ENCODE measurements at regions of chr17 and their contacts with region 1.

Region 1: DNA sequence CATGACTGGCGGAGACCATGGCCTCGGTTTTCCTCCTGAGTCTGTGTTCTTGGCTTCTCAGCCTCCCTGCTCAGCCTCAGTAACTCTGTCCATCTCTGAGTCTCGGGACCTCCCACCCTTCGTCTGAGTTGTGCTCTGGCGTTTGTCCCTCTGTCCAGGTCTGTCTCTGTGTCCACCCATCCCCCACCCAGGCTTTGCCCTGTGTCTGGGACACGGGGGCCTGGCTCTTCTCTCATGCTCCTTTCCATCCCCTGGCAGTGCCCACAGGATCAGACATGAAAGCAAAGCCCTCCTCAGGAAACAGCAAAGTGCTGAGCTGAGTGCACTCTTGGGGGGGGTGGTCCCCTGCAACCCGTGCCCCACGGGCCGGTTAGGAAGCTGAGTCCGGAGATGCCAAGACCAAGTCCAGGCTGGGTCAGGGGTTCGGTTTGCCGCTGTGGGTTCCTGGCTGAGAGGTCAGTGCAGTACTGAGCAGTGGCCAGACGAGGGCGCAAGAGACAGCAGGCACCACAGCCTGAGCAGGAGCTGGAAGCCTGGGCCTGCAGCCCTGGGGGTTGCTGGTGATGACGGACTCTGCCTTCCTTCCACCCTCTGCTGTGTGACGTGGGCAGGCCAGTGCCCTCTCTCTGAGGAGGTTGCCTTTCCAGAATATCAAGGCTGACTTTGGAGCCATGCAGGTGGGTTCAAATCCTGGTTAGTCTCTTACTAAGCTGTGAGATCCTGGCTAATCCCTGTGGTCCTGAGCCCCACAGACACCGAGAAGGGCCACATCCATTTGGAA is 2.5 kb downstream of the P2RX1 start:
- DNase-seq: peak; percentile 84
- ATAC-seq: peak; percentile 69 to 70

Region 2: GRCh38 chr17:3859940-3860339 is 53.8 kb before region 1 on chr17:
- intact Hi-C with region 1: loop called (anchors 5 to 10 kb)
- DNase-seq: no peak
- ATAC-seq: no peak

Region 3: DNA sequence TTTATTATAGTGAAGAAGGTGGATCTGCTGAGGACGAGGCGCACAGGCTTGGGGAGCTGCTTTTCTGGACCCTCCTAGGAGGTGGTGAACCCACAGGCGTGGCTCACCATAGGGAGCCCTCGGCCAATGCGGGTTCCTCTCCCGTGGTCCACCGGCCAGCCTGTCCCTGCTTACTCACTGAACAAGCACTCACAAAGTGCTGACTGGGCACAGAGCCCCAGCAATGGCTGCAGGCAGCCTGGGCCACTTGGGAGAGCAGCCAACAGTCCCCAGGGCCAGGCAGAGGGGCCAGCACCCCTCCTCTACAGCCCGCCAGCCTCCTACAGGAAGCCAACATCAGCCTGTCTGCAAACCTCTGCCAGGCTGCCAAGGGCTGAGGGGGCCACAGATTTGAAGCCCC is 48.5 kb before region 1 on chr17:
- intact Hi-C with region 1: loop called (anchors 5 to 10 kb)
- DNase-seq: peak; percentile 65
- ATAC-seq: peak in 1 of 2 donors; percentile 56

Region 4: DNA sequence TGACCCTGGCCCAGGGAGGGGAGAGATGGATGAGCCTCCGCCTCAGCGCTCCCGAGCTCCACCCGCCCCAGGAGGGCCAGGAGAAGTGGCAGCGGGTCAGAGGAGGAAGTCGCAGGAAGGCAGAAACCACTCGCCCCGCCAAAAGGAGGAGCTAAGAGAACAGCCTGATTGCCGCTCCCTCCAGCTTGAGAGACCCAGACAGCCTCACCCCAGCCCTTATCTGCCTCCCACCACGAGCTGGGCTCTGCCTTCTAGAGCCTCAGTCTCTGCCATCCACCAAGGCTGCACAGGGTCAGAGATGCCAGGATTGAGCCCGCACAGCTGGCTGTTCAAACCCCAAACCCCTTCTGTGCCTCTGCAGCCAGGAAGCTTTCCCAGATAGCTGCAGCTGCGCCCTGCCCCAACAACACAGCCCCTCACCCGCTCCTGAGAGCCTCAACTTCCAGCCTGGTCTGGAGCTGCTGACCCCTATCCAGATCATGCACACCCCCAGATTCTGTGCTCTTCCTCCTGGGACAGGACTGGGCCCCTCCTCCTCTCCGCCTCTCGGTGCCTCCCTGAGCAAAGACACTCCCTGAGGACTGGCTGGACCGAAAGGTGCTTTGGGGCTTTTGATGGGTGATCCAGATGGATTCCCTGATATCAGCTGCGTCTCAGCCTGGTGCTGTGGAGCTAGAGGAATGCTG is 51.5 kb after region 1 on chr17:
- intact Hi-C with region 1: no loop called
- DNase-seq: peak; percentile 75
- ATAC-seq: peak; percentile 60 to 81